Heart left ventricle (tissue), 16 donors: ENCODE measurements at regions of chr17 and their contacts with region 1.

Region 1: GRCh38 chr17:59331129-59331928 is at the start of gene YPEL2:
- DNase-seq: peak; percentile 98 to 99 (median 98)
- ATAC-seq: peak; percentile 93 to 96 (median 94)
- H3K4me3 ChIP-seq: peak within 1 kb of the TSS; percentile 75 to 99 (median 96)
- H3K27ac ChIP-seq: peak within 1 kb of the TSS; percentile 89 to 100 (median 97)
- H3K4me1 ChIP-seq: peaks cover 3 to 79% (median 70%) of the 10 kb centered on the region in 12 donors
- H3K27me3 ChIP-seq: no peaks in the 10 kb centered on the region
- CTCF ChIP-seq: no peak
- POLR2A ChIP-seq: peak; percentile 88 to 97
- total RNA-seq, gene YPEL2: 14.9 to 65.5 (median 40.8) TPM

Region 2: GRCh38 chr17:59366773-59367657 is 35.7 kb after region 1 on chr17:
- intact Hi-C with region 1: loop called (anchors 2 to 5 kb)
- DNase-seq: peak in 4 of 5 donors; percentile 55 to 70 (median 59)
- ATAC-seq: peak; percentile 69 to 84 (median 73)
- H3K4me3 ChIP-seq: peak overlapping the region in 4 of 12 donors; percentile 1 to 9 (median 6)
- H3K27ac ChIP-seq: peak overlapping the region; percentile 80 to 99 (median 94)
- H3K4me1 ChIP-seq: peaks cover 48 to 100% (median 99%) of the 10 kb centered on the region in 12 donors
- H3K27me3 ChIP-seq: no peaks in the 10 kb centered on the region
- CTCF ChIP-seq: no peak
- POLR2A ChIP-seq: no peak

Region 3: DNA sequence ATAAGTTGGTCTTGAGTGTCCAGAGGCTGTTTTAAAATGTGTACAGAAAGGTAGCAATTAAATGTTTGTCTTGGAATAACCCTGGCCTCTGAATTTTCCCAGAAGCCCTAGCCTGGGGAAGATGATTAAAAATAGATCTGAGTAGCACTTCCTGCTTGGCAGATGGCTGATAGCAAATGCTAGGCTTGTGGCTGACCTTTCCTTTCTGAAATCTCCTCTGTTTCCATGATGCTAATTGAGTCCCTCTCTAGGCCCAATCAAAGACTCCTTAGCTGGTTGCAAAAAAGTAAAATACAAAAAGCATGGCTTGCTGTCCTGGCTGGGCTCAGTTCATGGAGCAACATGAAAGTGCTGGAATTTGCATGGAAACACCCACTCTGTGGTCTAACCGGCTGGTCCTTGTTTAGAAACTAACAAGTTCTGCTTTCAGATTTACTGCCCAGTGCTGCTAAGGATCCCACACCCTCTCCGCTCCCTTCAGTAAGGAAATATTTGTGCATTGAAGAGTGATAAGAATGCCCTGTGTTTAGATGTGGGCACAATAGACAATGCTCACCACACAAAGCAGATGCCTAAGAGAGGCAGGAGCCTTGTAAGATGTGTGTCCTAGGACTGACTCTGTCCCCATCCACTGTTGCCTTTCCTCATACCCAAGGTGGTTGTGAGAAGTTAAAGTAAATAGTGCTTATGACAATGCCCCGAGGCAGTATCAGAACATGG is 41.0 kb after region 1 on chr17:
- intact Hi-C with region 1: loop called (anchors 2 to 5 kb)
- DNase-seq: peak in 4 of 5 donors; percentile 50 to 74 (median 58)
- ATAC-seq: peak; percentile 75 to 88 (median 81)
- H3K4me3 ChIP-seq: peak overlapping the region in 5 of 12 donors; percentile 4 to 36 (median 24)
- H3K27ac ChIP-seq: peak overlapping the region; percentile 89 to 99 (median 94)
- H3K4me1 ChIP-seq: peaks cover 48 to 100% (median 98%) of the 10 kb centered on the region in 12 donors
- H3K27me3 ChIP-seq: no peaks in the 10 kb centered on the region
- CTCF ChIP-seq: no peak
- POLR2A ChIP-seq: peak in 1 of 2 donors; percentile 16

Region 4: DNA sequence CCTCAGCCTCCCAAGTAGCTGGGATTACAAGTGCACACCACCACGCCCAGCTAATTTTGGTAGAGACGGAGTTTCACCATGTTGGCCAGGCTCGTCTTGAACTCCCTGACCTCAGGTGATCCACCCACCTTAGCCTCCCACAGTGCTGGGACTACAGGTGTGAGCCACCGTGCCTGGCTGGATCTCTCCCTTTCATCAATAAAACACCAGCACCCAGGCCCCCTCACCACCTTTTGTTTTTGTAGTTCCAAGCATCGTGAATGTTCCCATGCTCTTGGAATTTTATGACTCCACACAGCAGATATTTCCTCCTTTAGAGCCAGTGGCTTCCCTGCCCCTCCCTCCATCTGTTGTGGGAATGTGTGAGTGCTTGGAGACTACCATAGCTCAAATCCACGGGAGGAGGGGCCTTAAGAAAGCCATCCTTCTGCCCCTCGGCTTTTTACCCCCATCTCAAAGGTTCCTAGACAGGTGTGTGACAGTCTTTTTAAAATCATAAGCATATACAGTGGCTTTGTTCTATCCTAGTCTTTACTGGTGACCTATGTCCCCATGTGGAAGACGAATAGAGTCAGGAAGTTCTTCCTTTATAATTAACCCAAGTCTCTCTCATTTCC is 47.2 kb after region 1 on chr17:
- intact Hi-C with region 1: loop called in 3 of 10 experiments (anchors 5 kb)
- DNase-seq: no peak
- ATAC-seq: peak in 3 of 4 donors; percentile 22 to 48 (median 40)
- H3K4me3 ChIP-seq: no peak overlapping the region
- H3K27ac ChIP-seq: peak overlapping the region; percentile 55 to 99 (median 91)
- H3K4me1 ChIP-seq: peaks cover 42 to 100% (median 90%) of the 10 kb centered on the region in 12 donors
- H3K27me3 ChIP-seq: no peaks in the 10 kb centered on the region
- CTCF ChIP-seq: no peak
- POLR2A ChIP-seq: no peak

Region 5: DNA sequence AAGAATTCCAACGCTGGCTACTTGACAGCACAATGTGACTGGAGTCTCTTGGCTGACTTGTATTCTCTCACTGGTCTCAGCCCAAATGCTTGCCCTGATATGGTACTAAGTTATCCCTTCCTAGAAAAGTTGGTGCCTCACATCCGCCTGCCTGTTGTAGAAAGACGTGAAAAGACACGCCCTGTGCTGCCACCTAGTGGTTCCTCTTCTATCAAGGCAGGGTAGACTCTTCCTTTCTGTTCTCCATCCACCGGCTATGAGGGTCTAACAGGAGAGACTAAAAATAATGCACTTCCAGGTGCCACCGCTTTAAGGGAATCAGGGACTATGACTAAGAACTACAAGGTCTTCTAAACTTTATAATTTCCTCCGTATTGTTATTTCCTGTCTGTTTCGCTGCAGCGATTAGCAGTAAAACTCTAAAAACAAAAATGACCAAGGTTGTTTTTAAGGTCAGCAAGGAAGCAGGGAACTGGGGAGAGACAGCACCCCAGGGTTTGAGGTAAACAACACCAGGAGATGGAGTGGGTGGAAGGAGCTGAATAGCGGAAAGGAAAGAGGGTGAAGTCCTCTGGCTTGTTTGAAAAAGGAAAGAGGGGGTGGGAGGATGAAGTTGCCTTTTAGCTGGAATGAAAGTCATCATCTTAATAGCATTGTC is 109.6 kb after region 1 on chr17:
- intact Hi-C with region 1: loop called (anchors 1 to 5 kb)
- DNase-seq: peak; percentile 79 to 95 (median 91)
- ATAC-seq: peak; percentile 86 to 96 (median 92)
- H3K4me3 ChIP-seq: peak overlapping the region in 4 of 12 donors; percentile 6 to 31 (median 17)
- H3K27ac ChIP-seq: peak overlapping the region; percentile 25 to 89 (median 73)
- H3K4me1 ChIP-seq: peaks cover 0 to 57% (median 30%) of the 10 kb centered on the region in 12 donors
- H3K27me3 ChIP-seq: no peaks in the 10 kb centered on the region
- CTCF ChIP-seq: peak; percentile 77 to 95 (median 87)
- POLR2A ChIP-seq: no peak

Region 6: DNA sequence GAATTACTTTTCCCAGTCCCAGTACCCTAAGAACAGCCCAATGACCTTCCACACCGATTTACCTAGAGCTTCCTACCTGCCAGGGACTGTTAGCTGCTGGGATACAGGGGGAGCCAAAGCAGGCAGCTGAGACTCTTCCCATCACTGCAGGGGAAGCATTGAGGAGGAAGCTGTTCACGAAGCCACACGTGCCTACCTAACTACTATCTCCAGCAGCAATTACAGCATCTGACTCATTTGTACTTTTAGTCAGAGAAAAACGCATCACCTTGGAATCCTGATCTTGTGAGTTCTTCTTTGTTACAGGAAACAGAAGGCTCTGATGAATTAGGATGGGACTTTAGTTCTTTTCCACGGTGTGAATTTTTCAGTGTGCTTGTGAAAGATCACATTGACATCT is 120.4 kb after region 1 on chr17:
- intact Hi-C with region 1: no loop called
- DNase-seq: no peak
- ATAC-seq: no peak
- H3K4me3 ChIP-seq: no peak overlapping the region
- H3K27ac ChIP-seq: no peak overlapping the region
- H3K4me1 ChIP-seq: peaks cover 0 to 9% (median 0%) of the 10 kb centered on the region in 12 donors
- H3K27me3 ChIP-seq: no peaks in the 10 kb centered on the region
- CTCF ChIP-seq: no peak
- POLR2A ChIP-seq: no peak